Natural killer cell (primary cell): ENCODE measurements at regions of chr20 and their contacts with region 1.

Region 1: GRCh38 chr20:833450-834150 is at the start of gene FAM110A:
- DNase-seq: peak; percentile 96 to 98
- ATAC-seq: peak; percentile 91 to 94 (median 94)
- H3K4me3 ChIP-seq: peak within 1 kb of the TSS; percentile 84
- H3K4me3 Mint-ChIP-seq: peak within 1 kb of the TSS; percentile 88
- H3K27ac ChIP-seq: peak within 1 kb of the TSS; percentile 83
- H3K27ac Mint-ChIP-seq: peak within 1 kb of the TSS; percentile 84 to 94
- H3K4me1 ChIP-seq: peaks cover 28% of the 10 kb centered on the region
- H3K4me1 Mint-ChIP-seq: peaks cover 47 to 50% of the 10 kb centered on the region in 2 donors
- H3K27me3 ChIP-seq: no peaks in the 10 kb centered on the region
- H3K27me3 Mint-ChIP-seq: no peaks in the 10 kb centered on the region
- CTCF ChIP-seq: no peak
- total RNA-seq, gene FAM110A: 25.1 to 91.0 (median 31.8) TPM

Region 2: DNA sequence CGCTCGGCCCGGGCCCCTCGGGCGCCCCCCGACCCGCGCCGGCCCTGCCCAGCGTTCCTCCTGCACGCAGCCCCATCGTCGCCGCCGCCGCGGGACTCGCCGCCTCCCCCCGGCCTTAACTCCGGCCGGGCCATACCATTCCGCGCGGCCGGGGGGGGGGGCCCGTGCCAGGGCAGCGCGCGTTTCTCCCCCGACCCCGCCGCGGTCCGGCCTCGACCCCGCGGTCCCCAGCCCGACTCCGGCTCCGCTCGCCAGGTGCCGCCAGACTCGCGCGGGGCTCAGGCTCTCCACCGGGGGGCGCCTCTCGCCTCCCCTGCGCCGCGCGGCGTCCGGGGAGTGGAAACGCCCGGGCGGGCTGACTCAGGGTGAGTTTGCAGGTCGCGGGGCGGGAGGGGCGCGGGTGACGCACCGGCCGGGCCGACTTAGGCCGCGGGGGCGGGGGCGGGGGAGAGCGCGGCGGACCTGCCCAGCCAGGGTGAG is 180.4 kb before region 1 on chr20 and contains the start of gene SRXN1:
- intact Hi-C with region 1: loop called (anchors 5 kb)
- DNase-seq: peak; percentile 83 to 85
- ATAC-seq: peak; percentile 93 to 97 (median 94)
- H3K4me3 ChIP-seq: peak within 1 kb of the TSS; percentile 59
- H3K4me3 Mint-ChIP-seq: peak within 1 kb of the TSS; percentile 85
- H3K27ac ChIP-seq: peak within 1 kb of the TSS; percentile 60
- H3K27ac Mint-ChIP-seq: peak within 1 kb of the TSS; percentile 68 to 76
- H3K4me1 ChIP-seq: peaks cover 22% of the 10 kb centered on the region
- H3K4me1 Mint-ChIP-seq: peaks cover 39 to 48% of the 10 kb centered on the region in 2 donors
- H3K27me3 ChIP-seq: no peaks in the 10 kb centered on the region
- H3K27me3 Mint-ChIP-seq: peaks cover 11 to 16% of the 10 kb centered on the region in 2 donors
- CTCF ChIP-seq: peak; percentile 64
- total RNA-seq, gene SRXN1: 9.1 to 16.7 (median 11.6) TPM

Region 3: DNA sequence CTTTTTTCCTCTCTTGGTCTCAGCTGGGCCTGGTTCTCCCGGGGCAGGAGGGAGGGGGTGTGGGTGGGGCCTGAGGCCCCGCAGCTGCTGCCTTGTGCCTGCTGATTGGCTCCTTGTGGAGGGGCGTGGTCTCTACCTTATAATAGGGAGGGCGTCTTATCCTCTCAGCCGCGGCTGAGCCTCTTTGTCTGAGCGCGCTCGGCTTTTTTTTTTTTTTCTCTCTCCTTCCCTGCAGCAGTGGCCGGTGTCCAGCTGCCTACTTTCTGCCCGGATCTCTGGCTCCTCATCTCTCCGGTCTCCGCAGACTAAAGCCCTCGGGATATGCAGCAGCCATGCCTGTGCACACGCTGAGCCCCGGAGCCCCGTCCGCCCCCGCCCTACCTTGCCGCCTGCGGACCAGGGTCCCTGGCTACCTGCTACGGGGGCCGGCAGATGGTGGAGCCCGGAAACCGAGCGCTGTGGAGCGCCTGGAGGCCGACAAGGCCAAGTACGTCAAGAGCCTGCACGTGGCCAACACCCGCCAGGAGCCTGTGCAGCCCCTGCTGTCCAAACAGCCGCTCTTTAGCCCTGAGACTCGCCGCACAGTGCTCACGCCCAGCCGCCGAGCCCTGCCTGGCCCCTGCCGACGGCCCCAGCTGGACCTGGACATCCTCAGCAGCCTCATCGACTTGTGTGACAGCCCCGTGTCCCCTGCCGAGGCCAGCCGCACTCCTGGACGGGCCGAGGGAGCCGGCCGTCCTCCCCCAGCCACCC is 11.0 kb after region 1 on chr20:
- intact Hi-C with region 1: loop called (anchors 1 kb)
- DNase-seq: peak; percentile 79 to 95
- ATAC-seq: peak; percentile 89 to 95 (median 94)
- H3K4me3 ChIP-seq: peak overlapping the region; percentile 65
- H3K4me3 Mint-ChIP-seq: peak overlapping the region; percentile 87
- H3K27ac ChIP-seq: peak overlapping the region; percentile 64
- H3K27ac Mint-ChIP-seq: peak overlapping the region; percentile 96
- H3K4me1 ChIP-seq: peaks cover 63% of the 10 kb centered on the region
- H3K4me1 Mint-ChIP-seq: peaks cover 30 to 39% of the 10 kb centered on the region in 2 donors
- H3K27me3 ChIP-seq: no peaks in the 10 kb centered on the region
- H3K27me3 Mint-ChIP-seq: no peaks in the 10 kb centered on the region
- CTCF ChIP-seq: no peak